ENCODE measurements at regions of chr2 and their contacts with region 1.

Region 1: DNA sequence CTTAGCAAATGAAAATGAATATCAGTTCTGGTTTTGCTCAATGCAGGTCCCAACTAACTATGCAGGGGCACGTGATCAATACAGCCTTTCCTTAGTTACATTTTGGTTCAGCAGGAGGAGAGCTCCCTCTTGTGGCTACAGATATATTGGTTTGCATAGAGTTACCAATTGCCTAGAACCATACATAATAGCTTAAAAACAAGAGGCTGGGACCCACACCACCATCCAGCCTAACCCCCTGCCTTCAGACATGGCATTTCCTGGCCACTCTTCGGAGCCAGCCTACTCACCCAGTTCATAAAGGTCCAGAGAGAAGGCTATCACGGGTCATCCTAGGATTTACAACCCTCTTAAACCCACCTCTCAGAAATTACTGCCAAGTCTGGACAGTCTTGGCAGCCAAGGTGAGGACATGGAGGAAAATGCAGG is 10.5 kb downstream of the CCDC93 start:
- DNase-seq: peak; percentile 60
- ATAC-seq: peak; percentile 98
- H3K4me3 Mint-ChIP-seq: no peak overlapping the region
- H3K27ac Mint-ChIP-seq: peak overlapping the region; percentile 24
- H3K4me1 Mint-ChIP-seq: peaks cover 17% of the 10 kb centered on the region
- H3K27me3 Mint-ChIP-seq: no peaks in the 10 kb centered on the region

Region 2: DNA sequence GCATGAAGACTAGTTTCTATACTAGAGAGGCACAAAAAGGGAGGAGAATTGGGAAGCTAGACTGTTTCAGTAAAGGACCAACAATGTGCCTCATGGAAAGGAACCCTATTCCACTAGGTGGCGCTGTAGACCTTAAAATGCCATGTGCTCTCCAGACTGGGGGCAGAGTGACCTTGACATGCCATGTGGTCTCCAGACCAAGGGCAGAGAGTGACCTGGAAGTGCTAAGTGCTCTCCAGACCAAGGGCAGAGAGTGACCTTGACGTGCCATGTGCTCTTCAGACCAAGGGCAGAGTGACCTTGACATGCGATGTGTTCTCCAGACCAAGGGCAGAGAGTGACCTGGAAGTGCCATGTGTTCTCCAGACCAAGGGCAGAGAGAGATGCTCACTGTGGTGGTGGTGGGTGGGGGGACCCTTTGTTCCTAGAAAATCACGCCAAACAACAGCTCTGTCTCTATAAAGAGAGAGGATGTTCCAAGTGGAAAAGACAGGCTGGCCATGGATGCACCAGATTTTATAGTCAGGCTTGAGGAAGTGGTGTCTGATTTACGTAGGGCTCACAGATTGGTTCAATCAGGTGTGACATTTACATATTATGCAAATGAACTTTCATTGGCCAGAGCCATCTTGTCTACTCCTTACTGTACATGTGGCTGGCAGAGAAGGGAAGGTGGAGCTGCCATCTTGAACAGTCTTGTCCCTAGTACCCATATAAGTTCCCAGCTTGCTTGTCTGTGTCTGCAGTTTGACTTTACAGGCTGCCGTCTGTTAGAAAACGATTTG is 532.9 kb before region 1 on chr2:
- CTCF ChIA-PET with region 1: no interaction called
- POLR2A ChIA-PET with region 1: no interaction called
- intact Hi-C with region 1: loop called in 1 of 2 experiments (anchors 2 kb)
- DNase-seq: peak; percentile 52
- ATAC-seq: no peak
- H3K4me3 Mint-ChIP-seq: no peak overlapping the region
- H3K27ac Mint-ChIP-seq: no peak overlapping the region
- H3K4me1 Mint-ChIP-seq: no peaks in the 10 kb centered on the region
- H3K27me3 Mint-ChIP-seq: no peaks in the 10 kb centered on the region

Region 3: GRCh38 chr2:117835990-117836760 is 167.2 kb before region 1 on chr2:
- CTCF ChIA-PET with region 1: interaction called, 4 read pairs
- POLR2A ChIA-PET with region 1: no interaction called
- intact Hi-C with region 1: loop called in 1 of 2 experiments (anchors 5 kb)
- DNase-seq: peak; percentile 67
- ATAC-seq: peak; percentile 71
- H3K4me3 Mint-ChIP-seq: no peak overlapping the region
- H3K27ac Mint-ChIP-seq: no peak overlapping the region
- H3K4me1 Mint-ChIP-seq: no peaks in the 10 kb centered on the region
- H3K27me3 Mint-ChIP-seq: no peaks in the 10 kb centered on the region

Region 4: GRCh38 chr2:117958186-117958585 is 45.2 kb before region 1 on chr2:
- CTCF ChIA-PET with region 1: interaction called, 6 read pairs
- POLR2A ChIA-PET with region 1: no interaction called
- intact Hi-C with region 1: loop called (anchors 2 to 5 kb)
- DNase-seq: no peak
- ATAC-seq: no peak
- H3K4me3 Mint-ChIP-seq: no peak overlapping the region
- H3K27ac Mint-ChIP-seq: no peak overlapping the region
- H3K4me1 Mint-ChIP-seq: no peaks in the 10 kb centered on the region
- H3K27me3 Mint-ChIP-seq: no peaks in the 10 kb centered on the region

Region 5: GRCh38 chr2:118013724-118014491 is 10.5 kb after region 1 on chr2 and contains the start of gene CCDC93:
- CTCF ChIA-PET with region 1: interaction called, 35 read pairs
- POLR2A ChIA-PET with region 1: interaction called, 5 read pairs
- intact Hi-C with region 1: loop called in 1 of 2 experiments (anchors 1 kb)
- DNase-seq: peak; percentile 90
- ATAC-seq: peak; percentile 89
- H3K4me3 Mint-ChIP-seq: peak within 1 kb of the TSS; percentile 85
- H3K27ac Mint-ChIP-seq: peak within 1 kb of the TSS; percentile 87
- H3K4me1 Mint-ChIP-seq: peaks cover 42% of the 10 kb centered on the region
- H3K27me3 Mint-ChIP-seq: no peaks in the 10 kb centered on the region
- total RNA-seq, gene CCDC93: 26.2 to 39.5 TPM

Region 6: DNA sequence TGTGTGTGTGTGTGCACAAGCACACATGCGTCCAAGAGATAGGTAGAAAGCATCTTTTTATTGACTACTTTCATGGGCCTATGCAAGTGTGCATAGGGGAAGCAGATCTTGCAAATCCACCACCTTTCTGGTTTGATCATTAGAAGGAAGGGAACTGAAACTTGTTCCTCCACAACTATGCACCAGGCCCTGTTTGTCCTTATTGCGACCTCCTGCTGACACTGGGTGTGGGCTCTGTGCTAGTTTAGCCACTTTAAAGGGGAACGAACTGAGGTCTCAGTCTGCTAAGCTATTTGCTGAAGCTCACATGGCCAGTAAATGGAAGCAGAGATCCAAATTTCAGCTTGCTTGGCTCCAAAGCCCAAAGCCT is 52.7 kb after region 1 on chr2:
- CTCF ChIA-PET with region 1: no interaction called
- POLR2A ChIA-PET with region 1: no interaction called
- intact Hi-C with region 1: no loop called
- DNase-seq: no peak
- ATAC-seq: no peak
- H3K4me3 Mint-ChIP-seq: no peak overlapping the region
- H3K27ac Mint-ChIP-seq: no peak overlapping the region
- H3K4me1 Mint-ChIP-seq: peaks cover 8% of the 10 kb centered on the region
- H3K27me3 Mint-ChIP-seq: peaks cover 12% of the 10 kb centered on the region

Region 7: GRCh38 chr2:118340103-118340502 is 336.7 kb after region 1 on chr2:
- CTCF ChIA-PET with region 1: no interaction called
- POLR2A ChIA-PET with region 1: no interaction called
- intact Hi-C with region 1: no loop called
- DNase-seq: no peak
- ATAC-seq: no peak
- H3K4me3 Mint-ChIP-seq: no peak overlapping the region
- H3K27ac Mint-ChIP-seq: no peak overlapping the region
- H3K4me1 Mint-ChIP-seq: no peaks in the 10 kb centered on the region
- H3K27me3 Mint-ChIP-seq: peaks cover 16% of the 10 kb centered on the region

Region 8: DNA sequence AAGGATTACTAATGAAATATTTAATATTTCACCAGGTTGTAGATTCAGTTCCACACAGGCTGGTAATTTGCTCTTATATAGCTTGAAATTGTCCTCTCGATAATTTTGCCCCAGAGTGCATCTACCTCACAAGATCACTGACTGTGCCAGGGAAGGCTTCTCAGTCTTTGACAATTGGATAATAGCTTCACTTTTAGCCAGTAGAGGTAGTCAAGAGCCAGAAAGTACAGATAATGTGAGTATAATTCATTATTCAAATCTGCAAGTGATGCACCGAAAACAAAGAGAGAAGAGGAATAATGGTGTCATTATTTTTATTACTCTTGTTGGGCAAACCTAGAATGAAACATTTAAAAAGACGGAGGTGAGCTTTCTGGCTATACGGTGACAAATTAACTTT is 551.2 kb after region 1 on chr2:
- CTCF ChIA-PET with region 1: no interaction called
- POLR2A ChIA-PET with region 1: no interaction called
- intact Hi-C with region 1: no loop called
- DNase-seq: no peak
- ATAC-seq: no peak
- H3K4me3 Mint-ChIP-seq: no peak overlapping the region
- H3K27ac Mint-ChIP-seq: no peak overlapping the region
- H3K4me1 Mint-ChIP-seq: no peaks in the 10 kb centered on the region
- H3K27me3 Mint-ChIP-seq: peaks cover 6% of the 10 kb centered on the region

Measured in activated CD4-positive, alpha-beta T cell treated with anti-CD3 and anti-CD28 coated beads for 36 hours (primary cell).